Activated CD4-positive, alpha-beta memory T cell treated with anti-CD3 and anti-CD28 coated beads for 36 hours (primary cell): ENCODE measurements at regions of chr5 and their contacts with region 1.

Region 1: GRCh38 chr5:173592050-173592669 is 24.3 kb downstream of the BOD1 start:
- DNase-seq: peak; percentile 25
- H3K4me3 Mint-ChIP-seq: no peak overlapping the region
- H3K27ac Mint-ChIP-seq: no peak overlapping the region
- H3K4me1 Mint-ChIP-seq: no peaks in the 10 kb centered on the region
- H3K27me3 Mint-ChIP-seq: no peaks in the 10 kb centered on the region

Region 2: DNA sequence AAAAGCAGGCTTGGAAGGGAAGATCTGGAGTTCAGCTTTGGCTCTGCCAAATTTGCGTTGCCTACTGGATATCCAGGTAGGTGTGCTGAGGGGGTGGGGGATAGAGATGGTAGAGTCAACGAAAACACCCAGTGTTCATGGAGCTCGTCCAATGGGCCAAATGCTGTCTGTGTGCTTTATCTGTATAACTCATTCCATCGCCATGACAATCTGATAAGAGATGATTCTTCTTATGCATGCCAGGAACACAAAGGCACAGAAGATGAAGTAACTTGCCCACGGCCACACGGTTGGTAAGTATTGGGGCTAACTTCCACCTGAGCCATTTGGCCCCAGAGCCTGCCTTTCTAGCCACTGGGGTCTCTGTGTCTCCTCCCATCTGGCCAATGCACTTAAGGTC is 28.9 kb before region 1 on chr5:
- CTCF ChIA-PET with region 1: no interaction called
- POLR2A ChIA-PET with region 1: no interaction called
- intact Hi-C with region 1: no loop called
- DNase-seq: no peak
- H3K4me3 Mint-ChIP-seq: no peak overlapping the region
- H3K27ac Mint-ChIP-seq: no peak overlapping the region
- H3K4me1 Mint-ChIP-seq: no peaks in the 10 kb centered on the region
- H3K27me3 Mint-ChIP-seq: peaks cover 17% of the 10 kb centered on the region

Region 3: GRCh38 chr5:173573126-173573960 is 18.8 kb before region 1 on chr5:
- CTCF ChIA-PET with region 1: interaction called, 19 read pairs
- POLR2A ChIA-PET with region 1: no interaction called
- intact Hi-C with region 1: no loop called
- DNase-seq: peak; percentile 74
- H3K4me3 Mint-ChIP-seq: no peak overlapping the region
- H3K27ac Mint-ChIP-seq: no peak overlapping the region
- H3K4me1 Mint-ChIP-seq: no peaks in the 10 kb centered on the region
- H3K27me3 Mint-ChIP-seq: peaks cover 23% of the 10 kb centered on the region